HepG2 (cell line): ENCODE measurements at regions of chr19 and their contacts with region 1.

Region 1: GRCh38 chr19:13846557-13847406 is 30.2 kb upstream of the NANOS3 start:
- DNase-seq: peak; percentile 95
- ATAC-seq: peak; percentile 66
- H3K4me3 ChIP-seq: peak overlapping the region; percentile 53 to 70 (median 64); a peak in 5 of 6 replicates
- H3K27ac ChIP-seq: peak overlapping the region; percentile 99
- H3K4me1 ChIP-seq: peaks cover 84% of the 10 kb centered on the region
- H3K27me3 ChIP-seq: no peaks in the 10 kb centered on the region; a peak in 1 of 5 replicates
- CTCF ChIP-seq: no peak
- EP300 ChIP-seq: peak; percentile 75 to 91
- POLR2A ChIP-seq: peak; percentile 21 to 79; a peak in 2 of 4 replicates
- RAD21 ChIP-seq: no peak

Region 2: GRCh38 chr19:13748169-13748828 is 98.5 kb before region 1 on chr19:
- CTCF ChIA-PET with region 1: no interaction called
- POLR2A ChIA-PET with region 1: interaction called, 11 read pairs
- in situ Hi-C with region 1: no loop called
- intact Hi-C with region 1: no loop called
- DNase-seq: no peak
- ATAC-seq: no peak
- H3K4me3 ChIP-seq: peak overlapping the region; percentile 69 to 98 (median 90)
- H3K27ac ChIP-seq: peak overlapping the region; percentile 66
- H3K4me1 ChIP-seq: peaks cover 33% of the 10 kb centered on the region
- H3K27me3 ChIP-seq: no peaks in the 10 kb centered on the region; a peak in 1 of 5 replicates
- CTCF ChIP-seq: no peak
- EP300 ChIP-seq: no peak
- POLR2A ChIP-seq: 0 out of 4 replicates have a peak, but pooled peaks of 1 of the 2 experiments have one; percentile 6
- RAD21 ChIP-seq: no peak

Region 3: DNA sequence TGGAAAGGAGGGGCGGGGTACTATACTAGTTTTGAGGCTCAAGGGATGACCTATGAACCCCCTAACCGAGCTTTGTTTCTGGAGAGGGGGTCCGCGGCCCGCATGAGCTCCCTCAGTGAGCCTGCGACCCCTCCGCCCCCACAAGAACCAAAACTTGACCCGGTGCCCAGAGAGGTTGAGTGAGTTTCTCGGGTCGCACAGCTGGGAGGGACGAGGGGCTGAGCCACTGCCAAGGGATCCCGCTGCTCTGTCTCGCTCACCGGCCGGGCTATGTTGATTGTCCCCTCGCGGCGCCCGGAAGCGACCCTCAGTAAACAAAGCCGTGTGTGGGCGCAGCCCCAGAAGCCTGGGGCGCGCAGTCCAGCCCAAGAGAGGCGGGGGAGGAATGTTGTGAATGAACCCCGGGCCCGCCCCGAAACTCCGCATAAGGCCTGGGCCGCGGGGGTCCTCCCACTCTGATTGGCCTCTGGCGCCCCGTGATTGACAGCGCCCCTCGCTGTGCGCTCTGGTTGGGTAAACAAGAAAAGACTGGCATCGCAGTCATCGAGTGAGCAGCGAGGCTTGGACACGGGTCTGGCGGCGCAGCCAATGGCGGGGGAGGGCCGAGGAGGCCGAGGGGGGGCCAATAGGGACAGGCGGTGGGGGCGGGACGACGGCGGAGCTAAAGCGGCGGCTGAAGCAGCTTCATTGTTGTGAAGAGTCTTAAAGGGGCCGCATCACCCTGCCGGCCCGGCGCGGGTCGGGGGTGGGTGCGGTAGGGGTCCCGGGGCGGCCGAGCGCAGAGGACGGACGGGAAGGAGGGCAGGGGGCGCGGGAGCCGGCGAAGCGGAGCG is 51.8 kb before region 1 on chr19 and contains the start of gene ZSWIM4:
- CTCF ChIA-PET with region 1: no interaction called
- POLR2A ChIA-PET with region 1: interaction called, 13 read pairs
- in situ Hi-C with region 1: no loop called
- intact Hi-C with region 1: no loop called
- DNase-seq: peak; percentile 98
- ATAC-seq: peak; percentile 98
- H3K4me3 ChIP-seq: peak within 1 kb of the TSS; percentile 70 to 93 (median 91)
- H3K27ac ChIP-seq: peak within 1 kb of the TSS; percentile 48
- H3K4me1 ChIP-seq: peaks cover 31% of the 10 kb centered on the region
- H3K27me3 ChIP-seq: no peaks in the 10 kb centered on the region
- CTCF ChIP-seq: no peak
- EP300 ChIP-seq: 0 out of 4 replicates have a peak, but pooled peaks of 1 of the 2 experiments have one; percentile 22
- POLR2A ChIP-seq: peak in 1 of 2 experiments; percentile 42; a peak in 2 of 4 replicates
- RAD21 ChIP-seq: no peak
- total RNA-seq, gene ZSWIM4: 0.27 and 0.33 TPM in 2 replicates

Region 4: GRCh38 chr19:13861732-13862531 is 15.2 kb after region 1 on chr19:
- CTCF ChIA-PET with region 1: interaction called, 5 read pairs
- POLR2A ChIA-PET with region 1: interaction called, 30 read pairs
- in situ Hi-C with region 1: no loop called
- intact Hi-C with region 1: no loop called
- DNase-seq: peak; percentile 77
- ATAC-seq: peak; percentile 82
- H3K4me3 ChIP-seq: peak overlapping the region; percentile 67 to 77 (median 75)
- H3K27ac ChIP-seq: peak overlapping the region; percentile 54
- H3K4me1 ChIP-seq: peaks cover 36% of the 10 kb centered on the region
- H3K27me3 ChIP-seq: peaks cover 0 to 9% of the 10 kb centered on the region in 2 experiments; a peak in 1 of 5 replicates
- CTCF ChIP-seq: peak; percentile 95
- EP300 ChIP-seq: no peak
- POLR2A ChIP-seq: no peak
- RAD21 ChIP-seq: peak; percentile 97